ENCODE measurements at regions of chr10 and their contacts with region 1.

Region 1: GRCh38 chr10:123967396-123968243 is 76.0 kb upstream of the CPXM2 start:
- DNase-seq: peak; percentile 71
- H3K4me3 ChIP-seq: no peak overlapping the region
- H3K27ac ChIP-seq: no peak overlapping the region
- H3K4me1 ChIP-seq: no peaks in the 10 kb centered on the region
- H3K27me3 ChIP-seq: peaks cover 7% of the 10 kb centered on the region
- CTCF ChIP-seq: peak; percentile 87

Region 2: GRCh38 chr10:123331438-123331837 is 636.2 kb before region 1 on chr10:
- intact Hi-C with region 1: no loop called
- DNase-seq: no peak
- H3K4me3 ChIP-seq: no peak overlapping the region
- H3K27ac ChIP-seq: no peak overlapping the region
- H3K4me1 ChIP-seq: no peaks in the 10 kb centered on the region
- H3K27me3 ChIP-seq: no peaks in the 10 kb centered on the region
- CTCF ChIP-seq: no peak

Region 3: DNA sequence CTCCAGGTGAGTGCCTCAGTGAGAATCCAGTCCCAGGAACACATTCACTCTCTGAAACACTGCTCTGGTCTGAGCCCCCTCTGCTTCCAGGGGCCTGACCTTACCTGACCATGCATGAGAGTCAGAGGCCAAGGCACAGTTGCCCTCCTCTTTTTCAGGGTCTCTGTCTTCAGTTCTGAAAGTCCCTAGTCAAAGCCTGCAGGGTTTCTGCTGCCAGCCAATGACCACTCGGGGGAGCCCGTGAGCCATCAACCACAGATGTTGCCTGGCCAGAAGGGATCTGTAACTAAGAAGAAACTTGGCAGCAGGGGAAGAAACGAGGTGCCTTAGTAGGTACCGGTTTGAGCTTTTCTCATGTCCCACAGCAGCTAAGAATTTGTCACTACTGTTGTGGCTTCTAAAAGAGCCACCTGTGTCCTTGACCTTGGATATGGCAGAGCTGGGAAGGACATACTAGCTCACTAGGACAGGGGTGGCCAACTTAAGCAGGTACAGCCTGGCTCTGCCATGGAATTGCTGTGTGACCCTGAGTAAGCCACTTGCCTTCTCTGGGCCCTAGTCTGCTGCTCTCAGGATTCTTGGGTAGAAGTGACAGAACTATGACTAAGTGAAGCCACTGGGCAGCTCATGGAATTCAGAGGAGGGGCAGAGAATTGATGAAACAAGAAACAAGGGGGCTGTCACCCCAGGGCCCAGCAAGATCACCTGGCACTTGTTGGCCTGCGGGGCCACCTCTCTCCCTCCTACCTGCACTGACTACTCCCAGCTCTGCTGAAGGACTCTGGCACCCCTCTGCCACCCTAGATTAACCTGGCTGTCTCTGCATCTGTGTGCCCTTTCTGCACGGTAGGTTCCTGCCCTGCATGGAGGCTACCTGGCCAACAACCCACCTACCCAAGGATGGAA is 385.3 kb before region 1 on chr10:
- intact Hi-C with region 1: loop called (anchors 2 kb)
- DNase-seq: peak; percentile 80
- H3K4me3 ChIP-seq: no peak overlapping the region
- H3K27ac ChIP-seq: no peak overlapping the region
- H3K4me1 ChIP-seq: no peaks in the 10 kb centered on the region
- H3K27me3 ChIP-seq: no peaks in the 10 kb centered on the region
- CTCF ChIP-seq: peak; percentile 77

Region 4: DNA sequence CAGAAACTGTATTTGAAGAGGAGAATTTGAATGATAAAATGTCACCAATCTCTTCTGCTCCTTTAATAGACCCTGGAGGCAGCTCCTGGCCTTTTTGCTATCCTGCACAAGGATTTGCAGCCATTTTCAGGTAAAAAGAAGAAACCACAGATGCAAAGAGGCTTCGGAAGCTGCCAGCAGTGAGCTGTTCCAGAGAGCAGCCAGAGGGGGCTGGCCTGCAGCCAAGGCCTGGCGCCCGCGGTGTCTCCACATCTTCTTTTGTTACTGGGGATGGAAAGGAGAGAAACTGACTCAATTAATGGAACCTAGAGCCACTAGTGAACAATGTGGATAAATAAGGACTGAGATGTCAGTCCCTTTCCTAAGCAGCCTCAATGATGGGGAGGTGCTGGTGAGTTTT is 325.3 kb before region 1 on chr10:
- intact Hi-C with region 1: loop called (anchors 2 kb)
- DNase-seq: no peak
- H3K4me3 ChIP-seq: no peak overlapping the region
- H3K27ac ChIP-seq: no peak overlapping the region
- H3K4me1 ChIP-seq: no peaks in the 10 kb centered on the region
- H3K27me3 ChIP-seq: no peaks in the 10 kb centered on the region
- CTCF ChIP-seq: no peak

Region 5: GRCh38 chr10:123848564-123849457 is 118.8 kb before region 1 on chr10:
- intact Hi-C with region 1: no loop called
- DNase-seq: no peak
- H3K4me3 ChIP-seq: no peak overlapping the region
- H3K27ac ChIP-seq: no peak overlapping the region
- H3K4me1 ChIP-seq: peaks cover 5% of the 10 kb centered on the region
- H3K27me3 ChIP-seq: no peaks in the 10 kb centered on the region
- CTCF ChIP-seq: no peak

Region 6: GRCh38 chr10:124152916-124153826 is 185.6 kb after region 1 on chr10:
- intact Hi-C with region 1: no loop called
- DNase-seq: peak; percentile 63
- H3K4me3 ChIP-seq: no peak overlapping the region
- H3K27ac ChIP-seq: peak overlapping the region; percentile 19
- H3K4me1 ChIP-seq: peaks cover 11% of the 10 kb centered on the region
- H3K27me3 ChIP-seq: no peaks in the 10 kb centered on the region
- CTCF ChIP-seq: no peak

Measured in colonic mucosa (tissue), 4 donors.